GM12878 (cell line): ENCODE measurements at regions of chr11 and their contacts with region 1.

Region 1: GRCh38 chr11:130861902-130862860 is 54.1 kb downstream of the SNX19 start:
- DNase-seq: no peak
- ATAC-seq: peak; percentile 96
- H3K4me3 ChIP-seq: no peak overlapping the region
- H3K27ac ChIP-seq: no peak overlapping the region
- H3K4me1 ChIP-seq: no peaks in the 10 kb centered on the region
- H3K27me3 ChIP-seq: no peaks in the 10 kb centered on the region
- CTCF ChIP-seq: peak; percentile 99 to 100 (median 100); a peak in 5 of 6 replicates
- EP300 ChIP-seq: no peak
- POLR2A ChIP-seq: no peak
- RAD21 ChIP-seq: peak; percentile 100

Region 2: GRCh38 chr11:130213143-130213978 is 648.8 kb before region 1 on chr11:
- CTCF ChIA-PET with region 1: interaction called, 22 read pairs
- POLR2A ChIA-PET with region 1: no interaction called
- RAD21 ChIA-PET with region 1: interaction called, 15 read pairs
- SMC1A ChIA-PET with region 1: interaction called, 11 read pairs
- in situ Hi-C with region 1: loop called (anchors 5 kb)
- intact Hi-C with region 1: loop called (anchors 2 kb)
- DNase-seq: no peak
- ATAC-seq: peak; percentile 95
- H3K4me3 ChIP-seq: no peak overlapping the region
- H3K27ac ChIP-seq: no peak overlapping the region
- H3K4me1 ChIP-seq: no peaks in the 10 kb centered on the region
- H3K27me3 ChIP-seq: no peaks in the 10 kb centered on the region
- CTCF ChIP-seq: peak; percentile 92 to 94 (median 94); a peak in 5 of 6 replicates
- EP300 ChIP-seq: no peak
- POLR2A ChIP-seq: no peak
- RAD21 ChIP-seq: peak; percentile 97

Region 3: DNA sequence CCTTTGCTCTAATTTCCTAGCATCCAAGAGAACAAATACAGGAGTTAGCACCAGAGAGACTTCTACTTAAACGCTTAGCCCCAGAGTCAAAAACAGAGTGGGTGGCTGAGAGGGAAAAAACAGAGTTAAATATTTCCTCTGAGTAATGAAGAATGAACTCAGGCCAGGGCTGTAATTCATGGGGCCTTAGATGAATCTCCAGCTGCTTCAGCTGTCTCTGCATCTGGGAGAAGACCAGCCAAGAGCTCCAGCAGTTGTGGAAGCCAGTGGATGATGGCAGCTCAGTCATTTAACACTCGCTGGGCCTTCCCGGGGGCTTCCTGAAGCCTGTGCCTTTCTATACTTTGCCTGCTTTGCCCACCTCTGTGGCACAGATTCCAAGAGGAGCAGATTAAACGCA is 419.4 kb before region 1 on chr11:
- CTCF ChIA-PET with region 1: interaction called, 21 read pairs
- POLR2A ChIA-PET with region 1: no interaction called
- RAD21 ChIA-PET with region 1: interaction called, 16 read pairs
- SMC1A ChIA-PET with region 1: interaction called, 177 read pairs
- in situ Hi-C with region 1: loop called (anchors 10 kb)
- intact Hi-C with region 1: no loop called
- DNase-seq: no peak
- ATAC-seq: no peak
- H3K4me3 ChIP-seq: no peak overlapping the region
- H3K27ac ChIP-seq: no peak overlapping the region
- H3K4me1 ChIP-seq: no peaks in the 10 kb centered on the region
- H3K27me3 ChIP-seq: peaks cover 0 to 2% of the 10 kb centered on the region in 2 experiments; a peak in 2 of 4 replicates
- CTCF ChIP-seq: no peak
- EP300 ChIP-seq: no peak
- POLR2A ChIP-seq: no peak
- RAD21 ChIP-seq: no peak

Region 4: DNA sequence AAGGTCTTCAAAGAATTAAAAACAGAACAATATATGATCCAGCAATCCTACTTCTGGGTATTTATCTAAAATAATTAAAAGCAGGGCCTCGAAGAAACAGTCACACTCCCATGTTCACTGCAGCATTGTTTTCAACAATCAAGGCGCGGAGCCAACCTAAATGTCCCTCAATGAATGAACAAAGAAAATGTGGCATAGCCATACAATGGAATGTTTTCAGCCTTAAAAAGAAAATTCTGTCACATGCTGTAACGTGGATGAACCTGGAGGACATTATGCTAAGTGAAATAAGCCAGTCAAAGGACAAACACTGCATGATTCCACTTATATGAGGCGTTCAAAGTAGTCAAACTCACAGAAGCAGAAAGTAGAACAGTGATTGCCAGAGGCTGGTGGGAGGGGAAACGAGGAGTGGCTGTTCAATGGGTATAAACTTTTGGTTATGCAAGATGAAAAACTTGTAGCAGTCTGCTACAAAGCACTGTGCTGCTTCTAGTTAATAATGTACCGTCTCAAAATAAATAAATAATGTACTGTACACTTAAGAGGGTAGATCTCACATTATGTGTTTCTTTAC is 12.9 kb after region 1 on chr11:
- CTCF ChIA-PET with region 1: interaction called, 19 read pairs
- POLR2A ChIA-PET with region 1: no interaction called
- RAD21 ChIA-PET with region 1: interaction called, 7 read pairs
- SMC1A ChIA-PET with region 1: interaction called, 8 read pairs
- in situ Hi-C with region 1: no loop called
- intact Hi-C with region 1: no loop called
- DNase-seq: no peak
- ATAC-seq: no peak
- H3K4me3 ChIP-seq: no peak overlapping the region
- H3K27ac ChIP-seq: no peak overlapping the region
- H3K4me1 ChIP-seq: no peaks in the 10 kb centered on the region
- H3K27me3 ChIP-seq: no peaks in the 10 kb centered on the region
- CTCF ChIP-seq: no peak
- EP300 ChIP-seq: no peak
- POLR2A ChIP-seq: no peak
- RAD21 ChIP-seq: no peak

Region 5: DNA sequence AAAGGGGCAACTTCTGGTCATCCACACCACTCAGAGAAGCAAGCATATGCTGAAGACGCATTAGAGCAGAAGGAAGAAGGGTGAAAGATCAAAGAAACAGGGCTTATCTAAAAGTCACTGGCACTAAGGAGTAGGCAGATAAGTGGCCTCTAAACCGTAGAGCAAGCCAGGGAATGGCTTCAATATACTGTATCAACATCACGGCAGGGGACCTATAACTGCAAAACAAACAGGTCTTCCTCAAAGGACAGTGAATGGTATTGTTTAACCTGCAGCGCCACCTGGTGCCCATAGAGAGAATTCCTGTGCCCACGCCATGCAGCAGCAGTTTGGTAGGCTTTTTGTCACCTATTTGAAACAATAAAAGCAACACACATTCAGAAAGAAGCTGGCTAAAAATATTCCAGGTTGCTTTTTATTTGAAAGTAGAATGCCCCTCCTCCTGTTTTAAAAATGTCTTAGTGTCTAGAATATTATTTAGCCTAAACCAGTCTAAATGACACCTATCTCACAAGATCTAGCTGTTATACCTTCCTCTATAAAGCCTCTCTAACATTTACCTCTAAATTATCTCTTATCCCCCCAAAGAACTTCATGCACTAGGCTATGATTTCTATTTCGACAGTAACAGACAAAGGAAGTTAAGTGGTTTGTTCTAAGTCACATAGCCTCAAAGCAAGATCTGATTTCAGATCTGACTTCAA is 32.3 kb after region 1 on chr11:
- CTCF ChIA-PET with region 1: interaction called, 24 read pairs
- POLR2A ChIA-PET with region 1: no interaction called
- RAD21 ChIA-PET with region 1: interaction called, 5 read pairs
- SMC1A ChIA-PET with region 1: interaction called, 6 read pairs
- in situ Hi-C with region 1: no loop called
- intact Hi-C with region 1: no loop called
- DNase-seq: peak; percentile 15
- ATAC-seq: peak; percentile 99
- H3K4me3 ChIP-seq: no peak overlapping the region
- H3K27ac ChIP-seq: no peak overlapping the region
- H3K4me1 ChIP-seq: no peaks in the 10 kb centered on the region
- H3K27me3 ChIP-seq: no peaks in the 10 kb centered on the region
- CTCF ChIP-seq: peak; percentile 81 to 87 (median 85)
- EP300 ChIP-seq: no peak
- POLR2A ChIP-seq: no peak
- RAD21 ChIP-seq: peak; percentile 72

Region 6: DNA sequence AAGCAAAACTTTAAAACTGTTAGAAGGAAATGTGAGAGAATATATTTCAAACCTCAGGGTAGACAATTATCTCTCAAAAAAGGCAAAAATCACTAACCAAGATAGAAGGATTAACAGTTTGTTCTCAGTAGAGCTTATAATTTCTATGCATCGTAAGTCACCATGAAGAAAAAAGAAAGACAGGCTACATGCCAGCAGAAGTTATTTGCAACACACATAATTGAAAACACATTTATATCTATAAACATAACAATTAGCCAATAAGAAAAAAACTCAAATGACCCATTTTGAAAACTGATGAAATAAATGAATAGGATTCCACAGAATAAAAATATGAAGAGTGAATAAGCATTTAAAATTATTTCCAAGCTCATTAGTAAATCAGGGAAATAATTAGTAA is 78.5 kb after region 1 on chr11:
- CTCF ChIA-PET with region 1: no interaction called
- POLR2A ChIA-PET with region 1: no interaction called
- RAD21 ChIA-PET with region 1: no interaction called
- SMC1A ChIA-PET with region 1: no interaction called
- in situ Hi-C with region 1: no loop called
- intact Hi-C with region 1: no loop called
- DNase-seq: no peak
- ATAC-seq: no peak
- H3K4me3 ChIP-seq: no peak overlapping the region
- H3K27ac ChIP-seq: no peak overlapping the region
- H3K4me1 ChIP-seq: no peaks in the 10 kb centered on the region
- H3K27me3 ChIP-seq: no peaks in the 10 kb centered on the region
- CTCF ChIP-seq: no peak
- EP300 ChIP-seq: no peak
- POLR2A ChIP-seq: no peak
- RAD21 ChIP-seq: no peak